A549 (cell line): ENCODE measurements at regions of chr12 and their contacts with region 1.

Region 1: GRCh38 chr12:52327052-52327829 is 6.0 kb upstream of the KRT83 start:
- DNase-seq: peak; percentile 98 to 100
- ATAC-seq: peak; percentile 94 to 98
- H3K4me3 ChIP-seq: no peak overlapping the region
- H3K27ac ChIP-seq: peak overlapping the region; percentile 75 to 90
- H3K4me1 ChIP-seq: peaks cover 19% of the 10 kb centered on the region
- CTCF ChIP-seq: peak; percentile 100
- EP300 ChIP-seq: no peak; a peak in 1 of 5 replicates
- POLR2A ChIP-seq: no peak
- RAD21 ChIP-seq: peak; percentile 95 to 96

Region 2: DNA sequence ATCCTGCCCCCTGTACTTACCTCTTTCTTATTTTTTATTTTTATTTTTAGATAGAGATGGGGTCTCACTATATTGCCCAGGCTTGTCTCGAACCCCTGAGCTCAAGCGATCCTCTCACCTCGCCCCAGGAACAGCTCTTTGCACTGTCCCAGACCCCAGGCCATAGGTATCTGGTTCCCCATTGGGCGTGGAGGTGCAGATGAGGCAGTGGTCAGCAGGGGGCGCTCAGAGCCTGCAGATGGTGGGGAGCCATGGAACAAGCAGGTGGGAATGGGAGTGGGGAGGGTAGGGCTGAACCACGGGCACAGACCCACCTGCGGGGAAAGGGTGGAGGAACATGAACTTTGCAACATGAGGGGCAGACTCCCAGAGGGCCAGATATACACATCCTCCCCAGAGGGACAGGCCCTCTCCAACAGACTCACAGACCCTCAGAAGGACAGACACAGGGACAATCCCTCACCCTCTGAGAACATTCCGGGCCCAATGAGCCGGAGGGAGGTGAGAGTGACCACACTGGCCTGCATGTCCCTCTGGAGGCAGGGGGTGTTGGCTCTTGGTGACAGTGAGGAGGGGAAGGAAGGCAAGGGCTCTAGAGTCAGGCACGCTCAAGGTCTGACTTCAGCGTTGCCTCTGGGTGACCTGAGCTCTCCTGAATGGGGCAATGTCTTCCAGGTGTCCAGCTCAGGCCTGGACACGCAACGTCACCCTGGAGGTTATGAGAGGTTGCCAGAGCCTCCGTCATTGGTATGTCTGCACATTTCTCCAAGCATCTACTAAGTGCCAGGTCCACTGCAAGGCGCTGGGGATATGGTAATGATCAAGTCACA is 170.3 kb before region 1 on chr12:
- CTCF ChIA-PET with region 1: interaction called, 86 read pairs
- POLR2A ChIA-PET with region 1: no interaction called
- DNase-seq: peak; percentile 81 to 88
- ATAC-seq: peak; percentile 72 to 78
- H3K4me3 ChIP-seq: no peak overlapping the region
- H3K27ac ChIP-seq: peak overlapping the region; percentile 100
- H3K4me1 ChIP-seq: peaks cover 63% of the 10 kb centered on the region
- CTCF ChIP-seq: peak; percentile 97
- EP300 ChIP-seq: no peak
- POLR2A ChIP-seq: no peak
- RAD21 ChIP-seq: peak; percentile 99 to 100

Region 3: GRCh38 chr12:52258335-52258901 is 68.8 kb before region 1 on chr12:
- CTCF ChIA-PET with region 1: interaction called, 61 read pairs
- POLR2A ChIA-PET with region 1: interaction called, 20 read pairs
- DNase-seq: no peak
- ATAC-seq: no peak; a peak in 1 of 6 replicates
- H3K4me3 ChIP-seq: no peak overlapping the region
- H3K27ac ChIP-seq: peak overlapping the region in 1 of 2 experiments; percentile 74; a peak in 3 of 6 replicates
- H3K4me1 ChIP-seq: peaks cover 60% of the 10 kb centered on the region
- CTCF ChIP-seq: no peak
- EP300 ChIP-seq: no peak
- POLR2A ChIP-seq: no peak
- RAD21 ChIP-seq: no peak

Region 4: DNA sequence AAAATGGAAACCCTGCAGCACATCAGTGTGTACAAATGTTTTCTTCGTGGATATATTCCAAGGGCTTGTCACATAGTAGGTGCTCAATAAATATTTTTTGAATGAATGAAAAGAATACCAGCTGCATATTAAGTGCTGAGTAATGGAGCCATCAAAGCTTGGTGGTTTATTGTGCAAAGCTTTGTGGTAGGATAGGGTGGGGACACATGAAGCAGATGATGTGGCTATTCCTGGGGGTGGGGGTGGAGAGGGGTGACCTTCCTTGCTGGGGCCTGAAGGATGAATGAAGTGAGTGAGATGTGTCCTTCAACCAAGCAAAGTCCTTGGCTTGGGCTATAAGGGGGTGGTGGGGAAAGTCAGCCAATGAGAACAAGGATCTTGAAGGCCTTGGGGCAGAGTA is 31.6 kb before region 1 on chr12:
- CTCF ChIA-PET with region 1: interaction called, 33 read pairs
- POLR2A ChIA-PET with region 1: no interaction called
- DNase-seq: no peak
- ATAC-seq: no peak
- H3K4me3 ChIP-seq: no peak overlapping the region
- H3K27ac ChIP-seq: peak overlapping the region in 1 of 2 experiments; percentile 19; a peak in 1 of 6 replicates
- H3K4me1 ChIP-seq: peaks cover 28% of the 10 kb centered on the region
- CTCF ChIP-seq: no peak
- EP300 ChIP-seq: no peak
- POLR2A ChIP-seq: no peak
- RAD21 ChIP-seq: no peak

Region 5: GRCh38 chr12:52338241-52338960 is 11.2 kb after region 1 on chr12:
- CTCF ChIA-PET with region 1: interaction called, 53 read pairs
- POLR2A ChIA-PET with region 1: no interaction called
- DNase-seq: no peak
- ATAC-seq: peak in 1 of 2 experiments; percentile 18; a peak in 2 of 6 replicates
- H3K4me3 ChIP-seq: no peak overlapping the region
- H3K27ac ChIP-seq: peak overlapping the region in 1 of 2 experiments; percentile 27; a peak in 3 of 6 replicates
- H3K4me1 ChIP-seq: peaks cover 21% of the 10 kb centered on the region
- CTCF ChIP-seq: no peak
- EP300 ChIP-seq: no peak
- POLR2A ChIP-seq: no peak
- RAD21 ChIP-seq: no peak

Region 6: GRCh38 chr12:52364901-52365489 is 37.8 kb after region 1 on chr12:
- CTCF ChIA-PET with region 1: interaction called, 14 read pairs
- POLR2A ChIA-PET with region 1: no interaction called
- DNase-seq: no peak
- ATAC-seq: no peak
- H3K4me3 ChIP-seq: no peak overlapping the region
- H3K27ac ChIP-seq: peak overlapping the region in 1 of 2 experiments; percentile 56; a peak in 3 of 6 replicates
- H3K4me1 ChIP-seq: peaks cover 10% of the 10 kb centered on the region; the same call in 1 of the 3 replicates
- CTCF ChIP-seq: no peak
- EP300 ChIP-seq: no peak
- POLR2A ChIP-seq: no peak
- RAD21 ChIP-seq: no peak

Region 7: GRCh38 chr12:52884526-52885293 is 557.5 kb after region 1 on chr12:
- CTCF ChIA-PET with region 1: interaction called, 42 read pairs
- POLR2A ChIA-PET with region 1: no interaction called
- DNase-seq: peak; percentile 74 to 82
- ATAC-seq: peak; percentile 62 to 65; a peak in 5 of 6 replicates
- H3K4me3 ChIP-seq: no peak overlapping the region
- H3K27ac ChIP-seq: peak overlapping the region; percentile 55 to 83
- H3K4me1 ChIP-seq: peaks cover 33% of the 10 kb centered on the region
- CTCF ChIP-seq: peak; percentile 98
- EP300 ChIP-seq: no peak
- POLR2A ChIP-seq: no peak
- RAD21 ChIP-seq: peak; percentile 100